AG04449 (cell line): ENCODE measurements at regions of chr22 and their contacts with region 1.

Region 1: GRCh38 chr22:36470162-36470993 is 11.1 kb downstream of the TXN2 start:
- DNase-seq: no peak
- H3K4me3 ChIP-seq: 0 out of 2 replicates have a peak overlapping the region, but pooled peaks have one; percentile 3
- CTCF ChIP-seq: peak; percentile 95

Region 2: GRCh38 chr22:36301384-36301828 is 169.0 kb before region 1 on chr22:
- CTCF ChIA-PET with region 1: interaction called, 123 read pairs
- POLR2A ChIA-PET with region 1: no interaction called
- DNase-seq: no peak
- H3K4me3 ChIP-seq: no peak overlapping the region
- CTCF ChIP-seq: peak; percentile 88

Region 3: DNA sequence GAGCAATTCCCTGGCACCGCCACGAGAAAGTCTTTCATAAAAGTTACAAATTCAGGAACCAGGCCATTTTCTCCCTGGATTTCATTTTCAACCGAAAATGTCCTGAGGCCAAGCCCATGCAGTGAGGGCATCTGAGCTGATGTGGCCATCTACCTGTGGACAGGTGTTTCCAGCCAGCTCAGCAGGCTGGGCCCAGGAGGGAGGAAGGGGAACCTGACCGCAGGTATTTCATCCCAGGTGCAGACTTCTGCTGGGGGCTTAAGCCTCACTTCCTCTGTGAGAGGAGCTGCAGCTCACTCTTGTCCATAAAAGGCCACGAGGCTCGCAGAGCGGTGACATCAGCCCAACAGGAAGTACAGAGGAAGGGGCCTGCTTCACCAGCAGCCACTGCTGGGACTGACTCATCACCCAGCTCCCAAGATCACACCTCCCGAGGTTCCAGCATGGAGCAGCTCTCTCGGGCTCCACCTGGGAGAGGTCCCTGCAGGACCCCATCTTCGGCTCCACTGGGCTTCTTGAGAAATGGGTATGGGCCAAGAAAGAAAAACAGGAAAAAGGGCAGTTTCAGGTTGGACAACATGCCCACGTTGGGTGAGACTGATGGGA is 139.0 kb before region 1 on chr22:
- CTCF ChIA-PET with region 1: interaction called, 45 read pairs
- POLR2A ChIA-PET with region 1: interaction called, 8 read pairs
- DNase-seq: peak; percentile 86
- H3K4me3 ChIP-seq: no peak overlapping the region
- CTCF ChIP-seq: no peak

Region 4: GRCh38 chr22:36365020-36365411 is 105.4 kb before region 1 on chr22:
- CTCF ChIA-PET with region 1: interaction called, 34 read pairs
- POLR2A ChIA-PET with region 1: interaction called, 6 read pairs
- DNase-seq: peak; percentile 52
- H3K4me3 ChIP-seq: no peak overlapping the region; the same call in 1 of the 2 replicates
- CTCF ChIP-seq: no peak

Region 5: DNA sequence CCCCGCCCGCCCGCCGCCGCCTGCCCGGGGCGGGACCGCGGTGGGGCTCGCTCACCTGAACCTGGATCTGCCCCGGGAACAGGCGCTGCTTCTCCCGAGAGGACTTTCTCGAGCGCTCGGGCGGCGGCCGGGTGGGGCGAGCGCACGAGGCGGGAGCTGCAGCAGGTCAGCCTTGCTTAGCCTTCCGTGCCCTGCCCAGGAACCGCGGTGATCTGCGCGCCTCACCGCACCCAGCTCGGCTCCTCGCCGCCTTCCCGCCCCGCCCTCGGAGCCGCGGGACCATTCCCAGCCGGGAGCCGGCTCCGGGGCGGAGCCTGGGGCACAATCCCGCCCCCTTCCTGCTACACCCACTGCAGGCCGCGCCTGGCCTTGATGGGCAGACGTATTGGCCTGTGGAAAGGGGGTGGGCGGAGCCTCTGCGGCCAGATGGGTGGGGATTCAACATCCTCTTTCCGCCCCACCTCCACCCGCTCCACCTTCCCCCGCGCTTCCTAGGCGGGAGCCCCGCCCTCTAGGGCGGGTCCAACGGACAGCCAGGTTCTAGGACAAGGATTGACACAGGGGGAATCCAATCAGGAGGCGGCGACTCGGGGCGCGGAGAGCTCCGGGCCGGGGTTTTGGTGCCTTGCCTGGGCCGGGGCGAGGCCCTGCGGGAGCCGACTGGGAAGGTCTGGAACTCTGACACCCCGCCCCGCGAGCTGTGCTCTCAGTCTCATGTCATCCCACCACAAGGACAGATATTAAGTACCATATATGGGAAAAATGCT is 82.4 kb before region 1 on chr22 and contains the start of gene MYH9:
- CTCF ChIA-PET with region 1: interaction called, 69 read pairs
- POLR2A ChIA-PET with region 1: interaction called, 172 read pairs
- DNase-seq: peak; percentile 98
- H3K4me3 ChIP-seq: peak within 1 kb of the TSS; percentile 93
- CTCF ChIP-seq: no peak

Region 6: DNA sequence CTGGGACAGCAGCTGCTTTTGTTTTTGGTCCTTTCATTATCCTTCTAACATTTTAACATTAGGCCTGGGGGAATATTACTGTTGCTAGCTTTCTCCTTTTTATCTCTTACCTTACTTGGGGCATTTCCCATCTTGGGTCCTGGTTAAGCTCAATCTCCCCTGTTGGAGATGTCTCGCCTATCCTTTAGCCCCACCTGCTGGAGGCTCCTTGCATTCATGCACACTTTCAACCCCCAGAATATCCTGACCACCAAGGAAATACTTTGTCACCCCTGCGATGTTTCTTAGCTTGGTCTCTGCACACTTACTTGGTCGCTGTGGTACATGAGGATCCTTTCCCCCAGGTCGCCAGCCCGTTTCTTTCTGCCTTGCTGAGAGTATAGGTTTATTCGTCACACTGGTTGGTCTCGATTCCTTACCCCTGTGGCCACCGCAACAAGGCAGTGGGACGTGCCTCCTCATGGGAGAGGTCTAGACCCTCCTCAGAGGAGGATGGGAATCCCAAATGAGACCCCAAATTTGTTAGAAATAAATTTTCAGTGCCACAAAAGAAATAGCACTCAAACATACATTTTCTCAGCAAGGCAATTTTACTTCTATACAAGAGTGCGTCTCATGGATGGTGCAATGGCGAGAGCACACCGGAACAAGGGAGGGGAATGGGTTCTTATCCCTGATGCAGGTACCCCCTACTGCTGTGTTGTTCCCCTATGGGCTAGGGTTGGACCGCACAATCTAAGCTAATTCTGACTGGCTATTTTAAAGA is 16.4 kb after region 1 on chr22:
- CTCF ChIA-PET with region 1: interaction called, 14 read pairs
- POLR2A ChIA-PET with region 1: interaction called, 7 read pairs
- DNase-seq: no peak
- H3K4me3 ChIP-seq: no peak overlapping the region
- CTCF ChIP-seq: peak; percentile 59

Region 7: GRCh38 chr22:36528341-36528740 is 58.0 kb after region 1 on chr22:
- CTCF ChIA-PET with region 1: no interaction called
- POLR2A ChIA-PET with region 1: no interaction called
- DNase-seq: no peak
- H3K4me3 ChIP-seq: peak overlapping the region; percentile 90
- CTCF ChIP-seq: no peak

Region 8: GRCh38 chr22:36725356-36726006 is 255.1 kb after region 1 on chr22:
- CTCF ChIA-PET with region 1: no interaction called
- POLR2A ChIA-PET with region 1: no interaction called
- DNase-seq: no peak
- H3K4me3 ChIP-seq: no peak overlapping the region
- CTCF ChIP-seq: no peak